Stomach (tissue), 19 donors: ENCODE measurements at regions of chr6 and their contacts with region 1.

Region 1: GRCh38 chr6:44667668-44668390 is 280.3 kb downstream of the CDC5L start:
- DNase-seq: peak; percentile 39 to 44
- H3K4me3 ChIP-seq: no peak overlapping the region
- H3K27ac ChIP-seq: peak overlapping the region in 1 of 5 donors; percentile 24
- H3K4me1 ChIP-seq: no peaks in the 10 kb centered on the region
- H3K27me3 ChIP-seq: peaks cover 0 to 9% (median 0%) of the 10 kb centered on the region in 3 donors
- CTCF ChIP-seq: peak in 5 of 7 experiments; percentile 15 to 54 (median 40)
- EP300 ChIP-seq: no peak
- POLR2A ChIP-seq: no peak

Region 2: DNA sequence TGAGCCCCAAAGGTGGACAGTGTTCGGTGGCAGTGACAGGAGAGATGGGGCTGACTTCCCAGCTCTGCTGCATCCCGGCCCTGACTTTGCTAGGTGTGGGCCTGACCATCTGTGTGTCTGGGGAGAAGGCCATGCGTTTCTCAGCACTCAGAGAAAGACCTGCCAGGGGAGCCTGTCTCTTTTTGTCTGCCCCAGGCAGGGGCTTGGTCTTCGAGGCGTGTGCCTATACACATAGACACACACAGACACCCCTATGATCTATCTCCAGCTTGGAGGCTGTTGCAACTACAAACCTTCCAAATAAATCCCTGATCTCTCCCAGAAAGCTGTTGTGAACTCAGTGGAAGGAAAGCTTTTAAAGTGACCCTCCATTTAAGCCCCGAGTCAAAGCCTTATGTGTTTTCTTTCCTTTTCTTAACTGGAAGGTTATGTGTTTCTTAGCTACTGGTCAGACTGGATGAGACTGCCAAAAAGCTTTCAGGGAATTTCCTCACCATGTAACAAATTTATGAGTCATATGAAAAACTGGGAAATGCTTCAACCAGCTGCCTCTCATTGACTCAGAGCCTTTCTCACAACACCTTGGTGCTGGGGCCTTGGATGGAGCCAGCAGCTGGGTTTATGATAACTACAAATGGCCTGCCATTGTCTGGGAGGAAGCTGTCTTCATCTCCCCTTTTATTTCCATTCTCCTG is 177.8 kb before region 1 on chr6:
- intact Hi-C with region 1: loop called (anchors 10 kb)
- DNase-seq: peak in 1 of 2 donors; percentile 76
- H3K4me3 ChIP-seq: no peak overlapping the region
- H3K27ac ChIP-seq: peak overlapping the region in 4 of 5 donors; percentile 2 to 81 (median 67)
- H3K4me1 ChIP-seq: peaks cover 0 to 12% (median 5%) of the 10 kb centered on the region in 4 donors
- H3K27me3 ChIP-seq: peaks cover 0 to 12% (median 0%) of the 10 kb centered on the region in 3 donors
- CTCF ChIP-seq: no peak
- EP300 ChIP-seq: no peak
- POLR2A ChIP-seq: no peak

Region 3: DNA sequence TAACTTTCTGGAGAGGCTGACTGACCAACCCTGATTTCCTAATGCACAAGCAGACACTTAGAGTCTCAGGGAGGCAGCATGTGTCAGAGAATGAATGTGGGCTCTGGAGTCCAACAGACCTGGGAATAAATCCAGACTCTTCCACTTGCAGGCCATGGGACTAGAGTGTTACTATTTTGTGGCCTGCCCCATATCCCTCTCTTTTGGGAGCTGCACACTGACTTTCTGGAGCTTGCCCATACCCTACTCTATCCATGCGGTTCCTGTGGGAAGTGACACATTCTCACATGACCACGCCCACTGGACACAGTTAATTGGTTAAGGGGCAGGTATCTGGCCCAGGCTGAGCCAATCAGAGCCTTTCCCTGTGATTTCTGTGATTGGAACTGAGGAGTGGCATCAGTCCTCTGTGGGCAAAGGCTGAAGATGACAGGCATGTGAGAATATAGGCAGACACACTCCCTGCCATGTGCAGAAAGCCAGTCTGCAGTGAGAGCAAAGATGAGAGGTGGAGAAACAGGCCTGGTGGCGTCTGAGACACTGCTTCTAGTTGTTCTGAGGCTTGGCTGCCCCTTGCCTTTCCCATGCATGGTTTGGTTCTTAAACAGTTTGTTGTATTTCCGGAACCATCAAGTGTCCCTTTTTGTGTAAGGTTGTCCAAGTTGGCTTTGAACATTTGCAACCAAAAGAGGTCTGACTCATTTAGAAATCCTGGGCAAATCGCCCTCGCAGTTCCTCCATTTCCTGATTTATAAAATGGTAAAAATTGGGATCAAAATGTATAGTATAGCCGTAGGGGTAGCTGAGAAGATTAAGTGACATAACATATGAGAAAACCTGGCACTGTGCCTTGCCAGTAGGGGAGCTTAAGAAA is 154.7 kb before region 1 on chr6:
- intact Hi-C with region 1: no loop called
- DNase-seq: no peak
- H3K4me3 ChIP-seq: no peak overlapping the region
- H3K27ac ChIP-seq: no peak overlapping the region
- H3K4me1 ChIP-seq: no peaks in the 10 kb centered on the region
- H3K27me3 ChIP-seq: no peaks in the 10 kb centered on the region
- CTCF ChIP-seq: no peak
- EP300 ChIP-seq: no peak
- POLR2A ChIP-seq: no peak

Region 4: DNA sequence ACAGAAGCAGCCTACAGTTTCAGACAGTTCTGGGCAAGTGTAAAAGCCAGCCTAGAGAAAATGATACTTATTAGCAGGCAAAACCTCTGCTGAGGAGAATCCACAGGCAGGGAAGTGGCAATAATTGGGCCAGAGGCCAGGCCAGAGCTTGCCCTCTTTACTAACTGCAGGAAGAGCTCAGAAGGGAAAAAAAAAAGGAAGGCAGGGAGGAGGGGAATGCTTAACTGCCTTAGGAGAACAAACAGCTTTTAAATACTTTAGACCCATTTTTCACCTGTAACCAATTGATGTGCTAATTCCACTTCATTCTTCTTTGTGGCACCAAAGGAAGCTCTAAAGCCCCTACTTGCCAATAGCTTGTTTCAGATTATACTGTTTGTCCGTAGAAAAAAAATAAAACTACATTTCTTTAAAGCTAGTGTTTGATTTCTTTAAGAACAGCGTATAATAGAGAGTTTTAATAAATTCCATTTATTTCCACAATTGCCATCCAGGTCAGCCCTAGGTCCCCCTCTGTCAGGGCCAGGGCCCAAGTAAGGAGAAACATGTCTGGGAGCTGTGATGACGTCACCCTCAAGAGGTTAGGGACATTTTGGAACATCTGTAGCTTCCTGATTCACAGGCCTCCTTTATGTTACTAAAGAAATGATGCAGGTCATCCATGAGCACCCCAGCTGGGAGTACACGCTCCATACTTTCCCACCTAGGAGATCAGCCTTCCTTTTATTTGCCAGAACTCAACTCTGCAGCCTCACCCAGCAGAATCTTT is 104.0 kb after region 1 on chr6:
- intact Hi-C with region 1: no loop called
- DNase-seq: peak in 1 of 2 donors; percentile 16
- H3K4me3 ChIP-seq: no peak overlapping the region
- H3K27ac ChIP-seq: no peak overlapping the region
- H3K4me1 ChIP-seq: no peaks in the 10 kb centered on the region
- H3K27me3 ChIP-seq: no peaks in the 10 kb centered on the region
- CTCF ChIP-seq: no peak
- EP300 ChIP-seq: no peak
- POLR2A ChIP-seq: no peak